A673 (cell line): ENCODE measurements at regions of chr6 and their contacts with region 1.

Region 1: DNA sequence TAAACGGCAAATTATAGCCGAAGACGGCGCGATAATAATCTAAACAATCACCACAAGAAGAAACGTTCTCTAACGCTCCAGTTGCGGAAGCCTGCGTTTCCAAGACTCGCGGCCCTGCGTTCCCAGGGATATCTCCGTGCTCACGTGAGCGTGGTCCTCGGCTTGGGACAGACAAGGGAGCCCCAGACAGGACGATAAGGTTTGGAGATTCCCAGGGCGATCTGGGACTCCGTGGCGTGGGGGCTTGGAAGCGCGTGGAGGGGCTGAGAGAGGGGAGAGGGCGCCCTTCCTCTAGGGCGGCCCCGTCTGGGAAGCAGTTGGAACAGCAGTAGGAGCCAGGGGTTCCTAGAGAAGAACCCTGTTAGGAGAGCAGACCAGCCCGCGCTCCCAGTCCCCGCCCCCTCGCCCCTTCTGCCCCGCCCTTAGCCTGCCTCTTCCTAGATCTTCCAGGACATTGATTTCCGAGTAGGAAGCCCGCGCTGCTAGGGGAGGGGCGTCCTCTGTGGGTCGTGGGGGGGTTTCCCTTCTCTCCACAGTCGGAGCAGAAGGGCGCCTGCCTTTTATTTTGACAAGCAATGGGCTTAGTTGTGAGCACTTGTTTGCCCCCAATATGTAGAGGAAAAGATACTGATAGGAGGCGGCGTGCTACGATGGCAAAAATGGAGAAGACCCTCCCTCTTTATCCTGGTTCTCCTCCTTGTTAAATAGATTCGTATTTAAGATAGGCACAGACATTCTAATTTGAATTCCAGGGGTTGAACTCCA is 10.6 kb downstream of the NRN1 start:
- DNase-seq: peak; percentile 94
- H3K4me3 ChIP-seq: peak overlapping the region; percentile 54
- H3K27ac ChIP-seq: peak overlapping the region; percentile 74
- H3K4me1 ChIP-seq: peaks cover 28% of the 10 kb centered on the region
- H3K27me3 ChIP-seq: no peaks in the 10 kb centered on the region
- CTCF ChIP-seq: peak; percentile 68

Region 2: DNA sequence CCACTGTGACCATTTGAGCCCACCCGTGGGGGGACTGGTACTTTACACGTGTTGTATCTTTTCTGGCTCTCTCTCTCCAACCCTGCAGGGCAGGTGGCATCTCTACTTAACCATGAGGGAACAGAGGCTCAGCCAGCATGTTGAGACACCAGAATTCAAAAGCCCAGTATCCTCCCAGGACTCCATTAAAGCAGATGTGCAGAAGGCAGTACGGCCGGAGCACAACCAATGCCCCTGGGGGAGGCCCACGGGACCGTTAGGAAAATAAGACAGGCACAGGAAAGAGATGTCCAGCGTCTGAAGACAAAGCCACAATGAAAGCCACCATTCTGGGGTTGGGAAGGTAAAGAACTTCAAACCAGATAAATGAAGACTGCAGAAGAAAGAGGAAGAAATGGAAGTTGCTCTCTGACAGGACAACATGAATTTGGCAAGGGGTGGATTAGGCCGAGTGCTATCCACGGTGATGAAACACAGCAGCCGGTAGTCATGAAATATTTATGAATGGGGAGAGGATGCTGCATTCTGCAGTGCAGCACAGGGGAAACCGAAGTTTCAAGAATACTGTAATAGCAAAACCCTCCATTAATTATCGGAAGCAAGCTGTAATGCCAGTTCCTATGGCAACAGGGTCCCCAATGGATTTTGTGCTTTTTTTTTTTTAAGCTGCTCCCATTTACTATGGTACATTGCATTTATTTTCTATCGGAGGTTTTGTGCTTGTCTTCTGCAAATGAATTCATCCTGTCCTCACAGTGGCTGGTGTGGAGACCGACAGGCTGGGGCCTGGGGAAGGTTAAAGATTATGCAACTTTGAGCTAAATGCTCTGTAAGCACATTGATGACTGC is 168.9 kb before region 1 on chr6:
- CTCF ChIA-PET with region 1: no interaction called
- POLR2A ChIA-PET with region 1: no interaction called
- intact Hi-C with region 1: loop called (anchors 10 kb)
- DNase-seq: peak; percentile 53
- H3K4me3 ChIP-seq: no peak overlapping the region
- H3K27ac ChIP-seq: no peak overlapping the region
- H3K4me1 ChIP-seq: peaks cover 10% of the 10 kb centered on the region
- H3K27me3 ChIP-seq: no peaks in the 10 kb centered on the region
- CTCF ChIP-seq: no peak

Region 3: DNA sequence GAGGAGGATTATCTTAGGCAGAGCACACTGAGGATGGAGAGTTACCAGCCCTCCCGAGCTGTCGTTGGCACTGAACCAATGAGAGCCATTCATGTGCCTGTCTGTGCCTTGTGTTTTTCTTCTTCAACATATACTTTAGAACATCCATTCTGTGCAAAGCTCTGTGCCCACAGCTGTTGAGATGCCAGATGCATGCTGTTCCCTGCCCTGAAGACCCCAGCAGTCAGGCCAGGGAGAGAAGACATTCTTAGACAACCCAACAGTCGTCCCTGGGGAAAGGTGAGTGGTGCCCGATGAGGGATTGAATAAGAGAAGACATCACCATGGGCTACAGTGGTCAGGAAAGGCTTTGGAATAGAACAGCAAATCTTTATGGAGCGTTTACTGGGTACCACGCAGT is 103.5 kb before region 1 on chr6:
- CTCF ChIA-PET with region 1: no interaction called
- POLR2A ChIA-PET with region 1: no interaction called
- intact Hi-C with region 1: loop called (anchors 5 kb)
- DNase-seq: no peak
- H3K4me3 ChIP-seq: peak overlapping the region; percentile 38
- H3K27ac ChIP-seq: peak overlapping the region; percentile 49
- H3K4me1 ChIP-seq: peaks cover 6% of the 10 kb centered on the region
- H3K27me3 ChIP-seq: no peaks in the 10 kb centered on the region
- CTCF ChIP-seq: no peak

Region 4: DNA sequence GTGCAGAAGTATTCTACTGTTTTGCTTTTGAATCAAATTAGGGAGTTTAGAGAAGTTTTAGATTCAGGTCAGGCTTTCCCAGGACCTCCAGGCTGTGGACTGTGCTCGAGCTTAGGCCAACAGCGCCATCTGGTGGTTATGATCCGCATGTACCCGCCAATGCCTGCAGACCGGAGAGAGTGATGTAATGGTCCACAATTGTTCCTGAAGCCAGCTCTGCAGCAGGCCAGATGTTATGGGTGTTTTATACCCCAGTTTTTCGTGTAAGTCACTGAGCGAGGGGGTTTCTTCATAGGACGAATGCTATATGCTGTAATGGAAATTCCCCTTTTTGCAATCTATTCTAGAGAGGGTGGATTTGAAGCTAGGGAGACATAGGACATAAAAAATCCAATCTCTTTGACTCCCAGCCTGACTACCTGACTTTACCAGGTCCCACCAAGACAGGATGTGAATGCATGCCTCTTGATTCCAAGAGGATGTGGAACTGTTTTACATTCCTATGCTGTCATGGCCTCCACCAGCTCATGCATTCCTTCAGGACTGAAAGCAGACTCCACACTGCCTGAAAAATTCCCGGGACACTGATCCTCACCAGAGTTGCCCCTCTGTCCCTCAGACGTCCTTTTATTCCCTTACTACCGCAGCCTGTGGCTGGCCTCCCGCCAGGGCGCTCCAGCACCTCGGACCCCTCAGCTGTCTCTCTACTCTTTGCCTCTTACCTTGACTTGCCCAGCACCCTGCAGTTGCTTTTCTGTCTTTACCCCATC is 551.2 kb after region 1 on chr6:
- CTCF ChIA-PET with region 1: no interaction called
- POLR2A ChIA-PET with region 1: interaction called, 6 read pairs
- intact Hi-C with region 1: loop called (anchors 5 kb)
- DNase-seq: peak; percentile 87
- H3K4me3 ChIP-seq: peak overlapping the region; percentile 37
- H3K27ac ChIP-seq: no peak overlapping the region
- H3K4me1 ChIP-seq: peaks cover 6% of the 10 kb centered on the region
- H3K27me3 ChIP-seq: no peaks in the 10 kb centered on the region
- CTCF ChIP-seq: peak; percentile 91